Posterior vena cava (tissue), 2 donors: ENCODE measurements at regions of chr20 and their contacts with region 1.

Region 1: DNA sequence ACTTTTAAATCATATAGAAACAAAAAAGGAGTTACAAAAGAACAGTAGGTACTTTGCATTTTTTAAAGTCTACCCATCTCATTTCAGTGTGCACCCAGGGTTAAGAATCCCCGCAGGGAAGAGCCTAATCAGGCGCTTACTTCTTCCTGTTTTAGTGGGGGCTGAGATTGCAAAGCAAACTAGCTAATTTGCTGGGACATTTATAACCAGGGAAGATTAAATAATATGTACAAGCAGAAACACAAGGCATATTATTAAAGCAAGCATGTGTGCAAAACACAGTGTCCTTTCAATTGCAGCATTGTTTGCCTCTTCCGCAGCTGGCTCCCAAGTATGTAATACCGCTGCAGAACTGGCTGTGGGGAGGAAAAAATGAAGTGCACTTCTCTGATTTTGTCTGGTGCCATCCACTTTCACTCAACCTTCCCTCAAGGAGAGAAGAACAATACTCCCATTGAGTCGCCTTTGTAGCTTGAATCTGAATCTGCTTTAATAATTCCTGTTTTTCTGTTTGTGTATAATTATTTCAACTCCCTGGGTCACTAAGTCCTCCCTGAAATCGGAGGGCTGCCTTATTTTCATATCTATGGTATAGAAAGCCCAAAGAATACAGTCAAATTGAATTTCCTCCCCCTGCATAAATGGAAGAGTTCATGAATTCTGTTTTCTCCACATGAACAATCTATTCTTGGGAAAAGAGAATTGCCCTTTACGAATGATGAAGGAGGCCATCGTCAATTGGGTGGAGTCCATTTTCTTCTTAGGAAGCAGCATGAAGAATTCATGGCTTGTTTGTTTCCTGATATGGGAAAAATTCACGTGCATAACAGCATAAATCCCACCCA is 23.3 kb upstream of the BCAS1 start:
- DNase-seq: no peak

Region 2: GRCh38 chr20:54025251-54025771 is 68.3 kb before region 1 on chr20:
- intact Hi-C with region 1: no loop called
- DNase-seq: no peak

Region 3: GRCh38 chr20:54207743-54208547 is 114.3 kb after region 1 on chr20 and contains the start of gene PFDN4:
- intact Hi-C with region 1: loop called (anchors 10 kb)
- DNase-seq: peak; percentile 92
- total RNA-seq, gene PFDN4: 27.7 to 40.0 TPM